HepG2 (cell line): ENCODE measurements at regions of chr10 and their contacts with region 1.

Region 1: GRCh38 chr10:4373612-4374011 is 452.4 kb upstream of the AKR1E2 start:
- DNase-seq: no peak
- ATAC-seq: no peak
- H3K4me3 ChIP-seq: no peak overlapping the region
- H3K27ac ChIP-seq: no peak overlapping the region
- H3K4me1 ChIP-seq: no peaks in the 10 kb centered on the region
- H3K27me3 ChIP-seq: 0 out of 5 replicates have a peak, but pooled peaks cover 0 to 1% of the 10 kb centered on the region in 2 experiments
- CTCF ChIP-seq: no peak
- EP300 ChIP-seq: no peak
- POLR2A ChIP-seq: no peak
- RAD21 ChIP-seq: no peak

Region 2: GRCh38 chr10:4345877-4346646 is 27.6 kb before region 1 on chr10:
- CTCF ChIA-PET with region 1: no interaction called
- POLR2A ChIA-PET with region 1: no interaction called
- in situ Hi-C with region 1: no loop called
- intact Hi-C with region 1: loop called (anchors 2 kb)
- DNase-seq: no peak
- ATAC-seq: no peak
- H3K4me3 ChIP-seq: no peak overlapping the region
- H3K27ac ChIP-seq: no peak overlapping the region
- H3K4me1 ChIP-seq: no peaks in the 10 kb centered on the region
- H3K27me3 ChIP-seq: no peaks in the 10 kb centered on the region; a peak in 1 of 5 replicates
- CTCF ChIP-seq: no peak
- EP300 ChIP-seq: no peak
- POLR2A ChIP-seq: no peak
- RAD21 ChIP-seq: no peak

Region 3: DNA sequence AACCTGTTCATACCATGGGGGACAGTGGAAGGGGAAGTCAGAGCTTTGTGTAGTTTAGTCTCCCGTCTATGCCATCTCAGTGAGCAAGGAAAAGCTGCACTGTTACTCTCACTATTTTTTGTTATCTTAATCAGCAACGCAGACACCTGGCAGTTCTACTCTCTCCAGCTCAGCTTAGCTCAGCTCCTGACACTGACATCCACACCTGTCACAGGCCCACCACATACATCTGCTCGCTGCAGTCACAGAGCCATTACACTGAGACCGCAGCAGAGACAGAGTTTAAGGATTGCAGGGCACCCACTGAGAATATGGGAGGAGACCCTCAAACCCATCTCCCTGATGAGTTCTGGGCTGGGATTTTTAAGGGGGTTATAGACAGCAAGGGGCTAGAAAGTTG is 195.1 kb after region 1 on chr10:
- CTCF ChIA-PET with region 1: no interaction called
- POLR2A ChIA-PET with region 1: no interaction called
- in situ Hi-C with region 1: no loop called
- intact Hi-C with region 1: no loop called
- DNase-seq: no peak
- ATAC-seq: no peak
- H3K4me3 ChIP-seq: no peak overlapping the region
- H3K27ac ChIP-seq: no peak overlapping the region
- H3K4me1 ChIP-seq: no peaks in the 10 kb centered on the region
- H3K27me3 ChIP-seq: peaks cover 0 to 7% of the 10 kb centered on the region in 2 experiments; a peak in 2 of 5 replicates
- CTCF ChIP-seq: no peak
- EP300 ChIP-seq: no peak
- POLR2A ChIP-seq: no peak
- RAD21 ChIP-seq: no peak

Region 4: DNA sequence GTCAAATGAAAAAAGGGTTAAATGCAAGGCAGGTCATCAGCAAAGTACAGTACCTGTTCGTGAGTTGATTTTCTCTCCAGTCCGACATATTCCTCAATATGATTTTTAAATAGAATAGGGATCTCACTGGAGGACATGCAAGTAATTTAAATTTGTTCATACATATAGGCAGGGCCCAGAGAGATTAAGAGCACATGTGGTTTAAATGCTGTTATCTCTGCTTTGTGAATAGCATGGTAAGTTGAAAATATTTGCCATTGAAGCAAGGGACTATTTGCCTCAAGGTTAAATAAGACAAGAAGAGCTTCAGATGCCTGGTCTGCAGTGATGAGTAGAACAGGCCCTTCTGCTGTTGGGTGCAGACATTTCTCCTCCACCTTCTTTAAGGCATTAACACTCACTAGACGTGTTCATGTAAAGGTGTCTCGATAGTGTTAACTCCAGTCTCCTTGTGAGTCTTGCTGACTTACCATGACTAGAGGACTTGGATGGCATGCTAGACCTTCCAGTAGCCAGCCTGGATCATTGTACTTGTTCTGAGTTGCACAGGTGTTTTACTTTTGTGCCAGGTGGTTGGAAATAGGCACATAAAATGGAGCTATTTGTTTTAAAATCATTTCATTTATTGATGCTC is 705.1 kb after region 1 on chr10:
- CTCF ChIA-PET with region 1: no interaction called
- POLR2A ChIA-PET with region 1: no interaction called
- in situ Hi-C with region 1: no loop called
- intact Hi-C with region 1: no loop called
- DNase-seq: no peak
- ATAC-seq: no peak
- H3K4me3 ChIP-seq: no peak overlapping the region
- H3K27ac ChIP-seq: peak overlapping the region; percentile 15
- H3K4me1 ChIP-seq: peaks cover 57% of the 10 kb centered on the region
- H3K27me3 ChIP-seq: no peaks in the 10 kb centered on the region
- CTCF ChIP-seq: no peak
- EP300 ChIP-seq: no peak
- POLR2A ChIP-seq: no peak
- RAD21 ChIP-seq: no peak